Dorsolateral prefrontal cortex (tissue), 120 donors: ENCODE measurements at regions of chr10 and their contacts with region 1.

Region 1: GRCh38 chr10:97792141-97792721 is 20.4 kb upstream of the SFRP5 start:
- DNase-seq: peak in 9 of 10 donors; percentile 61 to 86 (median 72)
- H3K4me3 ChIP-seq: no peak overlapping the region
- H3K27ac ChIP-seq: no peak overlapping the region
- H3K27me3 ChIP-seq: peaks cover 0 to 5% (median 0%) of the 10 kb centered on the region in 45 donors
- CTCF ChIP-seq: peak in 55 of 56 donors; percentile 44 to 92 (median 86)

Region 2: DNA sequence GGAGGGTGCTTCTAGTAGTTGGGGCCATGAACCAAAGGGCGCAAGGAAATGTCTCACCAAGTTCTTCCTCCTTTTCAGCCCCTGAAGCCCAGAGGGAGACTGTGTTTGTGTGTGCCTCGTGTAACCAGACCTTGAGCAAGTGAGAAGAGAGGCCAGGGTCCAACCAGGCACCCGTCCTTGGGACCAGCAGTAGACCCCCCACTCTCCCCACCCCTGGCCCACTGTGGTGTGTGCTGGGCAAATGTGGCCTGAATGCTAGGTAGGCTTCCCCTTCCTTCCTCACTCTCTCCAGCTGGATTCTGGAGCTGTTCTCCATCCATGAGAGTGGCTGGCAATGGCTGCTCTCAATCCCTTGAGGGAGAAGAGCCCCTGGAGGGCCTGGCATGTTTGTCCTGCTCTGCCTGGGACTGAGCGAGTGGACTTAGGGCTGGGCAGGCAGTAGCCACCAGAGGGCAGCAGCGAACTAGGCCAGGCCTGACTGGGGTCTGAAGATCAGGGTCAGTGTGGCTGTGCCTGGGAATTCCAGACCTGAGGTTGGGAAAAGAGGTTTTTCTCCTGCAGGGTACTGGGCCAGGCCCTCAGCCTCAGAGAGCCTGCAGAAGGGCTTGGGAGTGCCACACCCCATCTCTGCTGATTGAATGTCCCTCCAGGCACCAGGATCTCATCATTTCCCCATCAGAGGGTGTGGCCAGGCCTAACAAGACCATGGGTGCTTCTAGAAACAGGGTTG is 32.9 kb before region 1 on chr10:
- intact Hi-C with region 1: no loop called
- DNase-seq: peak; percentile 56 to 80 (median 68)
- H3K4me3 ChIP-seq: no peak overlapping the region
- H3K27ac ChIP-seq: peak overlapping the region in 26 of 59 donors; percentile 21 to 76 (median 60)
- H3K27me3 ChIP-seq: no peaks in the 10 kb centered on the region
- CTCF ChIP-seq: peak; percentile 54 to 92 (median 84)

Region 3: DNA sequence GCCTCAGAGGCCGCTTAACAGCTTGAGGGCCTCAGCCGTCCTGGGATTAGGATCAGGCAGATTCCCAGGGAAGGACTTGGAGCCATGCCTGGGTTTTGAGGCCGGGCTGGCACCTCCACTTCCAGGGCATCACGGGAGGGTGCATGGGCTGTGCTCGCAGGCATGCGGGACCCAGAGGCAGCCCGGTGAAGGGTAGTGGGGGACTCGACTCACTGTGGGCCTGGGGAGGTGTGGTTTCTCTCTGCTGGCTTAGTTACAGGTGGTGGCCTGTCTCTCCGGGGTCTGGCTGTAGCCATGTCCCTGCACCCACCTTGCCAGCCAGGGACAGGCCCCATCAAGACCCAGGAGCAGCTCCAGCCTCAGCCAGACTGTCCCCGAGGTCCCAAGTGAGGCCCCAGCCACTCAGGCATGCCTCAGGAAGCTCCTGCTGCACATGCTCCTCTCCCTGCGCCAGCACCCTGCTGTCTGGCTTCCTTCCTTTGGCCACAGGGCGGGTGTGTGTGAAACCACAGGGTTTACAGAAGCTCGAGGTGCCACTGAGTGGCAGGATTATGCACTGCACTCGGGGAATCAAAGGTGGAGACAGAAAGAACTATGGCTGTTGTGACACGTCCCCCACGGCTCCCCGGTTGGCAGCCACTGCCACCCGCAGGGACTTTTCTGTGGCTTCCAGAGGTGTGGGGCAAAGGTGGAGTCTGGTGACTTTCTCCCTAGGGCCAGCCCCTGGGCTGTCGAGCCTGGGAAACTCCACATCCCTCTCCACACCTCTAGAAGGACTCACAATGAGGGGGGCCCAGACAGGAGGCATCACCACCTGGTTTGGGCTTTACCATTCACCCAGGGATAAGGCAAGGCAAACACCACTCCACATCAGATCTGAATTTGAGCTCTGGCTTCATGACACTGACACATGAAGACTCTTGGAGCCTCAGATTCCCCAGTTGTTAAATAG is 77.1 kb after region 1 on chr10:
- intact Hi-C with region 1: loop called (anchors 5 kb)
- DNase-seq: peak; percentile 37 to 96 (median 84)
- H3K4me3 ChIP-seq: peak overlapping the region in 8 of 59 donors; percentile 1 to 29 (median 15)
- H3K27ac ChIP-seq: peak overlapping the region in 11 of 59 donors; percentile 3 to 53 (median 33)
- H3K27me3 ChIP-seq: peaks cover 0 to 18% (median 0%) of the 10 kb centered on the region in 45 donors
- CTCF ChIP-seq: peak; percentile 49 to 84 (median 71)